Activated CD4-positive, alpha-beta memory T cell treated with anti-CD3 and anti-CD28 coated beads for 36 hours (primary cell): ENCODE measurements at regions of chr17 and their contacts with region 1.

Region 1: DNA sequence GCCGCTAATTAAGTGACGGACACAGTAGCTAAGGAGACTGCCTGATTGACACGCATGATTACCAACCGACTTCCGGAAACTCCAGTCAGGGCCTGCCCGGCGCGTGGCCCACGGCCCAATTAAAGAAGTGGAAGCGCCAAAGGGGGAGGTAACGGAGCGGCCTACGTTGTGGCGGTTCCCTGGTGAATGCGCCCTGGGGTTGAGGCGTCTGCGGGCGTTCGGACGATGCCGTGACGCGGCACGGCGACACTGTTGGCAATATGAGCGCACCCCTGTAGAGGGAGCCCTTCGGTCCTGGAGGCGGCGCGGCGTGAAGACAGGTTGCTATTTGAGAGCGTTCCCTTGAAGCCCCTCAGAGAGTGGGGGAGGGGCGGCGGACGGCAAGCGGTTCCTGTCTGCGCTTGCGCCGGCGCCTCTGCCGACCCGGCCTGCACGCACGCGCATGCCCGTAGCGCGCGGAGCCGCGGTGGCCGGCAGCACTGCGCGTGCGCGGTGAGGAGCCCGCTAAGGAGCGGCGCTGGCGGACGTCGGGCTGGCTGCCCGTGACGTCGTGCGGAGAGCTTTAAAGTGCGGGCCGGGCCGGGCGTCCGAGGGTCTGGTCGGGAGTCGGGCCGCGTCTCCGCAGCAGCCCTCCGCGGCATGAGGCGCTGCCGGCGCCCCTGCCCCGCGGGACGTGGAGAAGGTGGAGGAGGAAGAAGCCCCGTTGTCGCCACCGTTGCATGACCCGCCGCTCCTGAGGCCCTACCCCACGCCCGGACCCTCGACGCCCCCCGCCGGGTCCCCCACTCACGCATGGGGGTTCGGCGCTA is at the start of gene ALKBH5:
- DNase-seq: peak; percentile 98
- H3K4me3 Mint-ChIP-seq: peak within 1 kb of the TSS; percentile 91
- H3K27ac Mint-ChIP-seq: peak within 1 kb of the TSS; percentile 99
- H3K4me1 Mint-ChIP-seq: peaks cover 51% of the 10 kb centered on the region
- H3K27me3 Mint-ChIP-seq: no peaks in the 10 kb centered on the region
- total RNA-seq, gene ALKBH5: 122 to 127 TPM

Region 2: DNA sequence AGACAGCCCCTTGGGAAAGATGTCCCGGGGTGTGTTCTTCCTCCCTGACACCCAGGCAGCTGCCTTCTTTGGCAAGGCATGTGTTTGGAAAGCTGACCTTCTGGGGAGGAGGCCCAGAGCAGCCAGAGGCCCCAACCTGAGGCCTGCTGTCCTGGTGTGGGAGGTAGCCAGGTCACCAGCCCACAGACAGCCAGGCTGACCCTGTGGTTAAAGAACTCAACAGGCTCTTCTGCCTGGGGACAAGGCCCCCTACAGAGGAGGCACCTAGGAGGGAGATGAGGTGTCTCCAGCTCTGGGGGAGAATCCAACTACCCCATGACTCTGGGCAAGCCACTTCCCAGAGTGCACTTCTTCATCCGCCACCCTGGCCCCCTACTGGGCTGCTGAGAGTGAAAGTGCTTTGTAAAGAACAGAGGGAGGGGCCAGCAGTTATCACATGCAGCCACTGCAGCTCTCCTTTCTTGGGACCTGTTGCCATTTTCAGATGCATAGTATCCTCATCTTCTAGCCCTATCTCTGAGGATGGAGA is 333.6 kb before region 1 on chr17:
- CTCF ChIA-PET with region 1: no interaction called
- POLR2A ChIA-PET with region 1: interaction called, 4 read pairs
- intact Hi-C with region 1: loop called (anchors 5 kb)
- DNase-seq: peak; percentile 93
- H3K4me3 Mint-ChIP-seq: no peak overlapping the region
- H3K27ac Mint-ChIP-seq: peak overlapping the region; percentile 97
- H3K4me1 Mint-ChIP-seq: peaks cover 70% of the 10 kb centered on the region
- H3K27me3 Mint-ChIP-seq: no peaks in the 10 kb centered on the region

Region 3: DNA sequence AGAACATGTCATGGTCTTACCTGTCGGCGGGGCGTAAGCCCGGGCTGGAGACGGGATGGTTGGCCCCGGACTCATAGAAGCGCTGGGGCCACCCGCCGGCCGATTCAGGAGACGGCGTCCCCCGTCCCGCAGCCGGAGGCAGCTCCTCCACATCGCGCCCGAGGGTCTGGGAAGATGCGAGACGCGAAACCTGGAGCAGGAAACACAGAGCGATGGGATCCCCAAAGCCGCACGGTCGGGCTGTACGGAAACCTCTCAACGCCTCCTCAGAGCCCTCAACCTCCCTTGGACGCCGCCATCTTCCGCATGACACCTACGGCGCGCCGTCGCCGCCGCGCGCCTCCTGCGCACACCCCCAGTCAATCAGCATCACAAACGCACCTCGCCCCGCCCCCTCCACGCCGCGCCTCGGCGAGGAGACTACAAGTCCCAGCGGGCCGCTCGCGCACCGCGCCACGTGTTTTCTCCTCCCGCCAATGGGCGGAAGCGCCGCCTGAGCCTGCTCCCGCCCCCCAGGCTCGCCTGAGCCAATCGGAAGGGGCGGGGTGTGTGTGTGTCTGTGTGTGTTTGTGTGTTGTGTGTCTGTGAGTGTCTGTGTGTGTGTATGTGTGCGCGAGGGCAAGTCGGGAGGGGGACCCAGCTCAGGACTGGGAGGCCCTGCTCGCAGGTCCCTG is 144.5 kb before region 1 on chr17 and contains the starts of genes ATPAF2 and GID4:
- CTCF ChIA-PET with region 1: interaction called, 3 read pairs
- POLR2A ChIA-PET with region 1: interaction called, 5 read pairs
- intact Hi-C with region 1: loop called (anchors 1 kb)
- DNase-seq: peak; percentile 100
- H3K4me3 Mint-ChIP-seq: peak within 1 kb of the TSS; percentile 92
- H3K27ac Mint-ChIP-seq: peak within 1 kb of the TSS; percentile 80
- H3K4me1 Mint-ChIP-seq: peaks cover 40% of the 10 kb centered on the region
- H3K27me3 Mint-ChIP-seq: no peaks in the 10 kb centered on the region
- total RNA-seq, gene ATPAF2: 27.5 to 30.0 TPM
- total RNA-seq, gene GID4: 6.1 to 6.2 TPM

Region 4: GRCh38 chr17:18141210-18141803 is 42.2 kb before region 1 on chr17:
- CTCF ChIA-PET with region 1: interaction called, 140 read pairs
- POLR2A ChIA-PET with region 1: interaction called, 8 read pairs
- intact Hi-C with region 1: loop called (anchors 1 kb)
- DNase-seq: no peak
- H3K4me3 Mint-ChIP-seq: no peak overlapping the region
- H3K27ac Mint-ChIP-seq: no peak overlapping the region
- H3K4me1 Mint-ChIP-seq: no peaks in the 10 kb centered on the region
- H3K27me3 Mint-ChIP-seq: no peaks in the 10 kb centered on the region

Region 5: GRCh38 chr17:18166894-18167293 is 16.6 kb before region 1 on chr17:
- CTCF ChIA-PET with region 1: no interaction called
- POLR2A ChIA-PET with region 1: interaction called, 12 read pairs
- intact Hi-C with region 1: no loop called
- DNase-seq: no peak
- H3K4me3 Mint-ChIP-seq: no peak overlapping the region
- H3K27ac Mint-ChIP-seq: no peak overlapping the region
- H3K4me1 Mint-ChIP-seq: no peaks in the 10 kb centered on the region
- H3K27me3 Mint-ChIP-seq: no peaks in the 10 kb centered on the region

Region 6: GRCh38 chr17:18260332-18261144 is 77.0 kb after region 1 on chr17 and contains the start of gene MIEF2:
- CTCF ChIA-PET with region 1: no interaction called
- POLR2A ChIA-PET with region 1: no interaction called
- intact Hi-C with region 1: loop called (anchors 1 kb)
- DNase-seq: peak; percentile 95
- H3K4me3 Mint-ChIP-seq: peak within 1 kb of the TSS; percentile 75
- H3K27ac Mint-ChIP-seq: peak within 1 kb of the TSS; percentile 75
- H3K4me1 Mint-ChIP-seq: peaks cover 43% of the 10 kb centered on the region
- H3K27me3 Mint-ChIP-seq: no peaks in the 10 kb centered on the region
- total RNA-seq, gene MIEF2: 6.5 to 6.8 TPM

Region 7: GRCh38 chr17:18855831-18856569 is 672.5 kb after region 1 on chr17:
- CTCF ChIA-PET with region 1: no interaction called
- POLR2A ChIA-PET with region 1: no interaction called
- intact Hi-C with region 1: loop called (anchors 10 kb)
- DNase-seq: peak; percentile 94
- H3K4me3 Mint-ChIP-seq: peak overlapping the region; percentile 93
- H3K27ac Mint-ChIP-seq: peak overlapping the region; percentile 79
- H3K4me1 Mint-ChIP-seq: peaks cover 36% of the 10 kb centered on the region
- H3K27me3 Mint-ChIP-seq: no peaks in the 10 kb centered on the region